Panc1 (cell line): ENCODE measurements at regions of chr2 and their contacts with region 1.

Region 1: GRCh38 chr2:164388511-164388910 is 232.8 kb downstream of the GRB14 start:
- DNase-seq: peak; percentile 20
- ATAC-seq: peak; percentile 93
- H3K4me3 ChIP-seq: no peak overlapping the region
- H3K27ac ChIP-seq: no peak overlapping the region
- H3K4me1 ChIP-seq: no peaks in the 10 kb centered on the region
- H3K27me3 ChIP-seq: no peaks in the 10 kb centered on the region
- CTCF ChIP-seq: no peak

Region 2: DNA sequence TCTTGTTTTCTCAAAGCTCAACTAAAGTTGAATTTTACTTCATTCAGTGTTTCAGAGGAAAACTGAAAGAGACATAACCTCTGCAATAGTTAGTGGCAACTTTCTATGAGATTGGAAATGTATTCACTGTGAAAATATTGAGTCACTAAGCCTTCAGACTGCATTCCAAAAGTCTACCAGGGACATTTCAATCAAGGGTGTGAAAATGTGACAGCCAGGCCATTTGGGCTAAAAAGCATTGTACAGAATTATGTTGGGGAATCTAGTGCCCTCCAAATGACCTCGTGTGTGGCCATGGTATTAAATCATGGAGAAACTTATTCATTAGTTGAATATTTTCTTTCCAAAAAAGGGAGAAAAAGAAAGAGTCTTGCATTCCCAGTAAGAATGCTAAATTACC is 19.1 kb before region 1 on chr2:
- CTCF ChIA-PET with region 1: no interaction called
- POLR2A ChIA-PET with region 1: interaction called, 15 read pairs
- in situ Hi-C with region 1: no loop called
- intact Hi-C with region 1: no loop called
- DNase-seq: no peak
- ATAC-seq: no peak
- H3K4me3 ChIP-seq: no peak overlapping the region
- H3K27ac ChIP-seq: no peak overlapping the region
- H3K4me1 ChIP-seq: no peaks in the 10 kb centered on the region
- H3K27me3 ChIP-seq: no peaks in the 10 kb centered on the region
- CTCF ChIP-seq: no peak

Region 3: GRCh38 chr2:164675027-164675426 is 286.5 kb after region 1 on chr2:
- CTCF ChIA-PET with region 1: no interaction called
- POLR2A ChIA-PET with region 1: no interaction called
- in situ Hi-C with region 1: no loop called
- intact Hi-C with region 1: no loop called
- DNase-seq: no peak
- ATAC-seq: no peak
- H3K4me3 ChIP-seq: no peak overlapping the region
- H3K27ac ChIP-seq: no peak overlapping the region
- H3K4me1 ChIP-seq: no peaks in the 10 kb centered on the region
- H3K27me3 ChIP-seq: no peaks in the 10 kb centered on the region
- CTCF ChIP-seq: no peak